ENCODE measurements at regions of chr1 and their contacts with region 1.

Region 1: DNA sequence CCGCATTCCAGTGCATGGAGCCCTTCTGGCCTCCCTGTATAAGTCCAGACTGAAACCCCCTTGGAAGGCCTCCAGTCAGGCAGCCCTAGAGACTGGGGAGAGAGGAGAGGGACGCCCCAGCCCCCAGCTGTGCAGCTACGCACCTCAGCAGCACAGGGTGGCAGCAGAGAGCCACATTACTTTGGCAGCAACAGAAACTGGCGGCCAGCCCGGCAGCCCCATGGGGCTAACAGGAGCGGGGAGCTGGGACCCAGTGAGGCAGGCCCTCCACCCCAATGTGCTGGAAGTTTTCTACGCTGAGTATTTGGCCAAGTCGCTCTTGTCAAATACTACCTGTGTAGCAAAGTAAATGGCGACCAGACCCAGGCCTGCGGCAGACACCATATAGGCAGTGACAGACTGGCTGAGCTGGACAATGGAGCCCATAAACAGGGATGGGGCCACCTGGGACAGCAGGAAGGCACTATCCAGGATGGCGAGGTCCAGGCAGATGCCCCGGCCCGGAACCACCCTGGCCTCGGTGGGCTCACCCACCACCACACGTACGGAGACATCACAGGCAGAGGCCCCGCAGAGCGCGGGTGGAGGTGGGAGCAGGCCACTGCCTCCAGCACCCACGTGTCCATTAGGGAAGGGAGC is 21.2 kb downstream of the SLC45A3 start:
- DNase-seq: no peak
- H3K4me3 ChIP-seq: no peak overlapping the region
- H3K27ac ChIP-seq: no peak overlapping the region
- H3K4me1 ChIP-seq: peaks cover 0 to 25% (median 3%) of the 10 kb centered on the region in 3 donors
- H3K27me3 ChIP-seq: peaks cover 0 to 7% (median 0%) of the 10 kb centered on the region in 4 donors
- CTCF ChIP-seq: peak; percentile 82 to 93 (median 86)
- POLR2A ChIP-seq: no peak

Region 2: GRCh38 chr1:205536759-205537361 is 122.2 kb before region 1 on chr1:
- intact Hi-C with region 1: loop called (anchors 5 kb)
- DNase-seq: no peak
- H3K4me3 ChIP-seq: no peak overlapping the region
- H3K27ac ChIP-seq: no peak overlapping the region
- H3K4me1 ChIP-seq: peaks cover 0 to 11% (median 0%) of the 10 kb centered on the region in 3 donors
- H3K27me3 ChIP-seq: peaks cover 0 to 10% (median 0%) of the 10 kb centered on the region in 4 donors
- CTCF ChIP-seq: no peak
- POLR2A ChIP-seq: no peak